Activated CD8-positive, alpha-beta T cell treated with anti-CD3 and anti-CD28 coated beads, Interleukin-2, amount 10 ng/mL, durations not matched to agents 7 days and 5 days (primary cell): ENCODE measurements at regions of chr1 and their contacts with region 1.

Region 1: GRCh38 chr1:25616095-25616986 is at the start of gene MAN1C1:
- DNase-seq: peak; percentile 79
- ATAC-seq: peak; percentile 69
- H3K4me3 Mint-ChIP-seq: peak within 1 kb of the TSS; percentile 66
- H3K27ac Mint-ChIP-seq: peak within 1 kb of the TSS; percentile 59
- H3K4me1 Mint-ChIP-seq: peaks cover 59% of the 10 kb centered on the region
- H3K27me3 Mint-ChIP-seq: peaks cover 22% of the 10 kb centered on the region
- total RNA-seq, gene MAN1C1: 16.8 to 17.9 TPM

Region 2: GRCh38 chr1:25590096-25590824 is 26.1 kb before region 1 on chr1:
- CTCF ChIA-PET with region 1: no interaction called
- POLR2A ChIA-PET with region 1: no interaction called
- DNase-seq: no peak
- ATAC-seq: no peak
- H3K4me3 Mint-ChIP-seq: no peak overlapping the region
- H3K27ac Mint-ChIP-seq: no peak overlapping the region
- H3K4me1 Mint-ChIP-seq: peaks cover 9% of the 10 kb centered on the region
- H3K27me3 Mint-ChIP-seq: peaks cover 14% of the 10 kb centered on the region

Region 3: DNA sequence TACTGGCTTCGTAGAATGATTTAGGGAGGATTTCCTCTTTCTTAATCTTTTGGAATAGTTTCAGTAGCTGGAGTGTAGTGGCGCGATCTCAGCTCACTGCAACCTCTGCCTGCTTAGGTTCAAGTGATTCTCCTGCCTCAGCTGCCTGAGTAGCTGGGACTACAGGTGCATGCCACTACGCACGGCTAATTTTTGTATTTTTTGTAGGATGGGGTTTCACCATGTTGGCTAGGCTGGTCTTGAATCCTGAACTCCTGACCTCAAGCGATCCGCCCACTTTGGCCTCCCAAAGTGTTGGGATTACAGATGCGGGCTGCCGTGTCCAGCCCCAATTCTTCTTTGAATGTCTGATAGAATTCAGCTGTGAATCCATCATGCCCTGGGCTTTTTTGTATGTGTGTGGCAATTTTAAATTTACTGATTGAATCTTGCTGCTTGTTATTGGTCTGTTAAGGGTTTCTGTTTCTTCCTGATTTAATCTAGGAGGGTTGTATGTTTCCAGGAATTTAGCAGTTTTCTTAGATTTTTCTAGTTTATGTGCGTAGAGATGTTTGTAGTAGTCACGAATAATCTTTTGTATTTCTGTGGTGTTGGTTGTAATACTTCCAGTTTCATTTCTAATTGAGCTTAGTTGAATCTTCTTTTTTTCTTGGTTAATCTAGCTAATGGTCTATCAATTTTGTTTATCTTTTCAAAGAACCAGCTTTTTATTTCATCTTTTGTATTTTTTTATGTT is 15.6 kb after region 1 on chr1:
- CTCF ChIA-PET with region 1: interaction called, 28 read pairs
- POLR2A ChIA-PET with region 1: no interaction called
- DNase-seq: peak; percentile 17
- ATAC-seq: peak; percentile 65
- H3K4me3 Mint-ChIP-seq: peak overlapping the region; percentile 77
- H3K27ac Mint-ChIP-seq: peak overlapping the region; percentile 91
- H3K4me1 Mint-ChIP-seq: peaks cover 62% of the 10 kb centered on the region
- H3K27me3 Mint-ChIP-seq: no peaks in the 10 kb centered on the region

Region 4: GRCh38 chr1:25642574-25643108 is 26.3 kb after region 1 on chr1:
- CTCF ChIA-PET with region 1: interaction called, 63 read pairs
- POLR2A ChIA-PET with region 1: no interaction called
- DNase-seq: peak; percentile 91
- ATAC-seq: peak; percentile 92
- H3K4me3 Mint-ChIP-seq: peak overlapping the region; percentile 56
- H3K27ac Mint-ChIP-seq: peak overlapping the region; percentile 85
- H3K4me1 Mint-ChIP-seq: peaks cover 60% of the 10 kb centered on the region
- H3K27me3 Mint-ChIP-seq: peaks cover 36% of the 10 kb centered on the region

Region 5: DNA sequence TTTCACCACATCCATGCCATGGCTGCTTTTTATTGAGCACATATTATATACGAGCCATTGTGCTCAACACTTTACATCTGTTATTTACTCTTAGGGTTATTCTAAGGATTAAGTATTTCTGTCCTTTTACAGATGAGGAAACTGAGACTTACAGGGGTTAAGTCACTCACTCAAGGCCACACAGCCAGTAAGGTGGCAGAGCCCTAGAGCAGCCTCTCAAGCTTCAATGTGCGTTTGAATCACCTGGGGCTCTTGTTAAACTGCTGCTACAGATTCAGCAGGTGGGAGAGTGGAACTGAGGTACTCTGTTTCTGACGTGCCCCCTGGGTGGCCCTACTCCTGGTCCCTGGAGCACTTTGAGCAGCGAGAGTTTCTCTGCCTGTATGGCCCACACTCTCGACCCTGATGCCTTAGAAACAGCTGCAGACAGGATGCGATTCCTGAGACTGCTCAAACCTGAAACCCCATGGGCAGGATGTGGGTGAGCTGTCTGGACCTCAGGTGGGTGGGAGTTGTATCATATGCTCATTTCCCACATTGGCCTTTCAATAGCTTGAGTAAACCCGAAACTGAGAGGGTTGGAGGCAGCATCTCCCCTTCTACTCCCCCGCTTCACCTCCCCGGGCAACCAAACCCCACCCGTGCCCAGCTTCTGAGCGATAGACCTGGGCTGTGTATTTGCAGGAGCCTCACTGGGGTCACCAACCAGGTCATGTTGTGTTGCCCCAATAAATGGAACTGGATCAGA is 59.6 kb after region 1 on chr1:
- CTCF ChIA-PET with region 1: interaction called, 16 read pairs
- POLR2A ChIA-PET with region 1: interaction called, 4 read pairs
- DNase-seq: peak; percentile 94
- ATAC-seq: peak; percentile 91
- H3K4me3 Mint-ChIP-seq: peak overlapping the region; percentile 65
- H3K27ac Mint-ChIP-seq: peak overlapping the region; percentile 55
- H3K4me1 Mint-ChIP-seq: peaks cover 64% of the 10 kb centered on the region
- H3K27me3 Mint-ChIP-seq: peaks cover 54% of the 10 kb centered on the region

Region 6: DNA sequence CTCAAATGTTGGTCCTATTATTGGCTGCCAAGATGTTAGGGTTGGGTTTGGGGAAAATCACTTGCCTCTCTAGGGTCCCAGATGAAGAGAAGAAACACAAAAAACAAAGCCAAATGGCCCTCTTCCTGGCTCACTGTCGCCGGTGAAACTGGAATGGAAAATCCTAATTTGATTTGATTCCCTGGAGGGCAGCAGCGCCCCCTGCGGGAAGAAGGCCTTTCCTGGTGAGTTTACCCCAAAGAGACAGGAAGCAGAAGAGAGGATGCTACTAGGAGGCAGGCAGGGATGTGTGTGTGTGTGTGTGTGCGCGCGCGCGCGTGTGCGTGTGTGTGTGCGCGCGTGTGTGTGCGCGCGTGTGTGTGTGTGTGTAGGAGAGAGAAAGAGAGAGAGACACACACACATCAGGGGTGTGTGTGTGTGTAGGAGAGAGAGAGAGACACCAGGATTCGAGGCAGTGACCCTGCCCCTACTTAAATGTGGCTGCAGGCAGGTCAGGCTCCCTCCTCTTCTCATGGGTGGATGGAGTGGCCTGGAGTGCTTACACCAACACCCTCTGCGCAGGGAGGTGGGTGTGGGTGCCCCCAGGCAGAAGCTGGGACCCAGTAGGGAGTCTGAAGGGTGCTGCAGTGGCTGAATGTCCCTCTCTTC is 180.6 kb after region 1 on chr1:
- CTCF ChIA-PET with region 1: interaction called, 68 read pairs
- POLR2A ChIA-PET with region 1: no interaction called
- DNase-seq: peak; percentile 87
- ATAC-seq: peak; percentile 73
- H3K4me3 Mint-ChIP-seq: peak overlapping the region; percentile 33
- H3K27ac Mint-ChIP-seq: peak overlapping the region; percentile 70
- H3K4me1 Mint-ChIP-seq: peaks cover 50% of the 10 kb centered on the region
- H3K27me3 Mint-ChIP-seq: peaks cover 13% of the 10 kb centered on the region